SK-N-SH (cell line): ENCODE measurements at regions of chr19 and their contacts with region 1.

Region 1: DNA sequence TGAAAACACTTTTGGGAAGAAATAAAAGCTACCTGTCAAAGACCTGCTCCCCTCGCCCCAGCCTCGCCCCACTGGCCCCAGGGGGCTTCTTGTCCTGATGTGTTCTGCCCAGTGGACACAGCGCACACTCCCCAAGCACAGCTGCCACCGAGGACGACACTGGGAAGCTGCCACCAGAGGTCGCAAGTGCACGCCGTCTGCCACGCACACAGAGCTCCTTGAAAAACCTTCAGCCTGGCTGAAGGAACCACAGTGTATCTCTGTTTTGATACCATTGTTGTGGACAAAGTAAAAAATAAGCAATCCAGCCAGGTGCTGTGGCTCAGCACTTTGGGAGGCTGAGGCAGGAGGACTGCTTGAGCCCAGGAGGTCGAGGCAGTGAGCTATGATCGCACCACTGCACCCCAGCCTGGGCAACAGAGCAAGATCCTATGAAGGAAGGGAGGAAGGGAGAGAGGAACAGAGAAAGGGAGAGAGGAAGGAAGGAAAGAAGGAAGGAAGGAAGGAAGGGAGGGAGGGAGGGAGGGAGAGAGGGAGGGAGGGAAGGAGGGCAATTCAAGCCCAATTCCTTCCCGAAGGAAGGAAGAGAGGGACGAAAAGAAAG is 57.3 kb downstream of the CEBPG start:
- DNase-seq: peak; percentile 83
- H3K4me3 ChIP-seq: peak overlapping the region in 1 of 2 experiments; percentile 28; a peak in 1 of 4 replicates
- H3K27ac ChIP-seq: peak overlapping the region in 1 of 2 experiments; percentile 73; a peak in 1 of 4 replicates
- H3K4me1 ChIP-seq: peaks cover 16 to 44% of the 10 kb centered on the region in 2 experiments
- H3K27me3 ChIP-seq: no peaks in the 10 kb centered on the region
- CTCF ChIP-seq: peak; percentile 84
- EP300 ChIP-seq: no peak
- RAD21 ChIP-seq: peak; percentile 97

Region 2: DNA sequence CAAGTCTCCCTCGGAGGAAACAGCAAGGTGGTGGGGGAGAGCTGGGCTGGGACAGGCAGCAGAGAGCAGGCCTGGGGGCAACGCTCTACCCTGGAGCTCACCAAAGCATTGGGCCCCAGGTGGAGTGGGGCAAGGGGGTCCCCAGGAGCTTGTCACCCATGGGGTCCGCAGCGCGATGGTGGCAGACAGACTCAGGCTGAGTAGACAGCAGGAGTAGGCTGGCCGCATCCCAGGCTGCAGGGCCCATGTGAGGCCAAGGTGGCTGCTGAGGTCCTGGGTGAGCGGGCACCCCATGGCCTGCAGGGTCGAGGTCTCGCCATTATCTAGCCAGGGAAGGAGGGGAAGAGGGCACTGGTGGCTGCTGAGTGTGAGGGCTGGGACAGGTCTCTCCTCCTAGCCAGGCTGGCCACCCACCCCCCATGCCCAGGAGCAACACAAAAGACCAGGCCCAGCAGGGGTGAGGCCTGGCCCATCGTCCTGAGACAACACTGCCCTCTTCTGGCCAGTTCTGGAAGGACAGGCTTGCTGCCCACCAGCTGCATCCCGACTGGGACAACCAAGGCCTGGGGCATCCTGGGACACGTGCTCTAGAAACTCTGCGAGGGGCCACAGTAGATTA is 24.1 kb before region 1 on chr19:
- CTCF ChIA-PET with region 1: interaction called, 10 read pairs
- POLR2A ChIA-PET with region 1: no interaction called
- DNase-seq: peak; percentile 94
- H3K4me3 ChIP-seq: no peak overlapping the region
- H3K27ac ChIP-seq: no peak overlapping the region; a peak in 1 of 4 replicates
- H3K4me1 ChIP-seq: peaks cover 0 to 28% of the 10 kb centered on the region in 2 experiments; a peak in 1 of 4 replicates
- H3K27me3 ChIP-seq: no peaks in the 10 kb centered on the region
- CTCF ChIP-seq: peak; percentile 83
- EP300 ChIP-seq: no peak
- RAD21 ChIP-seq: peak; percentile 91

Region 3: DNA sequence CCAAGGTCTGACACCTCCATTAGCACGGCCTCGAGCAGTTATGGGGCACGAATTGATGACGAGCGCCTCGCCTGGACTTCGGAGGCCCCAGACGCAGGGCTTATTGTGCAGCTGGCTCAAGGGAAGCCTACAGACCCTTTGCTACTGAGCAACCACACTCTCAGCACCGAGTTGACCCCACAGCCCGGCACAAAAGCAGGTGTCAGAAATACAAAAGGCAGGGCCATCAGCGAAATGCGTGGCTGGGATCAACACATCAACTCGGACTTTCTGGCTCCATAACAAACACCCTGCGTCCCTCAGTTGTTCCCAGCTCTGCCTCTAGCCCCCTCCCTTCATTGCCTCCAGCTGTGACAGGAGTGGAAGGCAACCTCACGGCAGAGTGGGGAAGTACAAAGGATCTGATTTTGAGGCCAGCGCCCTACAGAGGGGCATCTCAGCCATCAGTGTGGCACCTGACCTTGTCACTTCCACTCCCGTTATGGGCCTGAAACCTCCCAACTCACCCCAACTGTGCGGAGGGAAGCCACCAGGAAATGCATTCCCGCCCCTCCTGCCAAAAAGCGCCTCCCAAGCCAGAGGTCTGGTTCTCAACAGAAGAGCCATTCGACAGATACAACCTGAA is 72.8 kb after region 1 on chr19:
- CTCF ChIA-PET with region 1: interaction called, 14 read pairs
- POLR2A ChIA-PET with region 1: interaction called, 3 read pairs
- DNase-seq: no peak
- H3K4me3 ChIP-seq: no peak overlapping the region
- H3K27ac ChIP-seq: peak overlapping the region in 1 of 2 experiments; percentile 97; a peak in 2 of 4 replicates
- H3K4me1 ChIP-seq: peaks cover 0 to 72% of the 10 kb centered on the region in 2 experiments; a peak in 2 of 4 replicates
- H3K27me3 ChIP-seq: no peaks in the 10 kb centered on the region
- CTCF ChIP-seq: no peak
- EP300 ChIP-seq: no peak
- RAD21 ChIP-seq: no peak

Region 4: GRCh38 chr19:33527125-33527524 is 96.3 kb after region 1 on chr19:
- CTCF ChIA-PET with region 1: interaction called, 13 read pairs
- POLR2A ChIA-PET with region 1: no interaction called
- DNase-seq: peak; percentile 58
- H3K4me3 ChIP-seq: no peak overlapping the region
- H3K27ac ChIP-seq: no peak overlapping the region
- H3K4me1 ChIP-seq: peaks cover 0 to 12% of the 10 kb centered on the region in 2 experiments; a peak in 2 of 4 replicates
- H3K27me3 ChIP-seq: no peaks in the 10 kb centered on the region
- CTCF ChIP-seq: no peak
- EP300 ChIP-seq: no peak
- RAD21 ChIP-seq: no peak

Region 5: GRCh38 chr19:33678796-33679585 is 248.2 kb after region 1 on chr19:
- CTCF ChIA-PET with region 1: interaction called, 11 read pairs
- POLR2A ChIA-PET with region 1: no interaction called
- DNase-seq: peak; percentile 37
- H3K4me3 ChIP-seq: no peak overlapping the region
- H3K27ac ChIP-seq: no peak overlapping the region
- H3K4me1 ChIP-seq: peaks cover 0 to 45% of the 10 kb centered on the region in 2 experiments; a peak in 1 of 4 replicates
- H3K27me3 ChIP-seq: no peaks in the 10 kb centered on the region
- CTCF ChIP-seq: no peak
- EP300 ChIP-seq: no peak
- RAD21 ChIP-seq: peak; percentile 38; the same call in 1 of the 2 replicates